Lower leg skin (tissue), 4 donors: ENCODE measurements at regions of chr1 and their contacts with region 1.

Region 1: GRCh38 chr1:196584703-196585102 is 23.5 kb downstream of the KCNT2 start:
- DNase-seq: no peak
- H3K4me3 ChIP-seq: no peak overlapping the region
- CTCF ChIP-seq: no peak
- POLR2A ChIP-seq: no peak

Region 2: DNA sequence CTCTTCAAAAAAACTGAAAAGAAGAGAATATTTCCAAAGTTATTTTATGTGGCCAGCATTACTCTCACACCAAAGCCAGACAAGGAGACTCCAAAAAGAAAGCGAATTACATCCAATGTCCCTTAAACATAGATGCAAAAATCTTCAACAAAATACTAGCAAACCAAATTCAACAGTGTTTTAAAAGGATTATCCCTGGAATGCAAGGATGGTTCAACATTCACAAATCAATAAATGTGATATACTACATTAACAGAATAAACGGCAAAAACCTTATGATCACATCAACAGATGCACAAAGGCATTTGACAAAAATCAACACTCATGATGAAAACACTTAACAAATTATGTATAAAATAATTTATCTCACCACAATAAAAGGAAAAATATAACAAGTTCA is 982.7 kb after region 1 on chr1:
- intact Hi-C with region 1: loop called (anchors 10 kb)
- DNase-seq: no peak
- H3K4me3 ChIP-seq: no peak overlapping the region
- CTCF ChIP-seq: no peak
- POLR2A ChIP-seq: no peak

Region 3: GRCh38 chr1:197868751-197869489 is 1284.2 kb after region 1 on chr1:
- intact Hi-C with region 1: no loop called
- DNase-seq: no peak
- H3K4me3 ChIP-seq: no peak overlapping the region
- CTCF ChIP-seq: no peak
- POLR2A ChIP-seq: no peak